ENCODE measurements at regions of chr22 and their contacts with region 1.

Region 1: GRCh38 chr22:19151329-19152191 is 1.5 kb upstream of the GSC2 start:
- DNase-seq: no peak
- ATAC-seq: no peak
- H3K4me3 ChIP-seq: no peak overlapping the region
- H3K27ac ChIP-seq: no peak overlapping the region
- H3K4me1 ChIP-seq: no peaks in the 10 kb centered on the region
- H3K27me3 ChIP-seq: no peaks in the 10 kb centered on the region; the same call in 1 of the 2 replicates
- CTCF ChIP-seq: no peak

Region 2: DNA sequence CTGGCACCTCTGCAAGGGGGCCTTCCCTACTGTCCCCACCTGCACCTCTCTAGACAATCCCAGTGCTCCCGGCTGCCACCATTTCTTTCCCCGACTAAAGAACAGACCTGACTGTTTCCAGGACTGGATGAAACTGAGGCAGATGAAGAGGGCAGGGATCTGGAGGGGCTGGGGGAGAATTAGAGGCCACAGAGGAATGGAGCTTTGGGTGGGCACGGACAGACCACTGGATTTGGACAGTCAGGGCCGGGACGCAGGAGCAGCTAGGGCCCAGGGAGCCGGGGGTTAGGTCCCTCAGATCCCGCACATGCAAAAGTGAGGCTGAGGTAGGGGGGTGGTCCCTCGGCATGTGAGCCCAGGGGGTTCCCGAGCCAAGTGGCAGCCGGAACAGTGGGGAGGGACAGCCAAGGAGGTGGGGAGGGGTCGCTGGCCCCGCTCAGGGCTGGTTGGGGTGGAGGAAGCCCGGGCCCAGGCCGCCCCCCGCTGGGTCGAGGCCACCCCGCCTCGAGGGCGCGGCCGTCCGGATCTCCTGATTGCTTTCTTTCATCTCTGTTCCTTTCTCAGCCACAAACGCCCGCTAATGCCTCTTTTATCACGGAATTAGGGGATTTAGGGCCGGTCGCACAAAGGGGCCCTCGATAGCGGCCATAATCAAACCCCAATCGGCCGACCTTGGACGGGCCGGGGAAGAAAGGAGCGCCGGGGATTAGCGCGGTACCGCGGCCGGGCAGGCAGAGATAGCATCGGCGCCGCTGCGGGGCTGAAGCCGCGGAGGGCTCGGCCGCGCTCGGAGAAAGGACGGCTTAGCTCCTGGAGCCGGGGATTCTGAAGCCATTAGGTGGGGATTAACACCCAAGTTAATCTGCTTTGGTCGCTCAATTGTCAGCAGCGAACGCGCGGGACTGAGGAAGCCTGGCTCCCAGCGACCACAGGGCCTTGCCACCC is 17.7 kb after region 1 on chr22:
- CTCF ChIA-PET with region 1: interaction called, 12 read pairs
- POLR2A ChIA-PET with region 1: no interaction called
- in situ Hi-C with region 1: no loop called
- intact Hi-C with region 1: no loop called
- DNase-seq: no peak
- ATAC-seq: no peak
- H3K4me3 ChIP-seq: peak overlapping the region; percentile 28 to 41
- H3K27ac ChIP-seq: no peak overlapping the region
- H3K4me1 ChIP-seq: peaks cover 18% of the 10 kb centered on the region
- H3K27me3 ChIP-seq: no peaks in the 10 kb centered on the region; the same call in 1 of the 2 replicates
- CTCF ChIP-seq: no peak

Measured in Panc1 (cell line).